Activated CD4-positive, alpha-beta T cell treated with anti-CD3 and anti-CD28 coated beads, Interleukin-2, amount 10 ng/mL, durations not matched to agents 7 days and 5 days (primary cell): ENCODE measurements at regions of chr9 and their contacts with region 1.

Region 1: DNA sequence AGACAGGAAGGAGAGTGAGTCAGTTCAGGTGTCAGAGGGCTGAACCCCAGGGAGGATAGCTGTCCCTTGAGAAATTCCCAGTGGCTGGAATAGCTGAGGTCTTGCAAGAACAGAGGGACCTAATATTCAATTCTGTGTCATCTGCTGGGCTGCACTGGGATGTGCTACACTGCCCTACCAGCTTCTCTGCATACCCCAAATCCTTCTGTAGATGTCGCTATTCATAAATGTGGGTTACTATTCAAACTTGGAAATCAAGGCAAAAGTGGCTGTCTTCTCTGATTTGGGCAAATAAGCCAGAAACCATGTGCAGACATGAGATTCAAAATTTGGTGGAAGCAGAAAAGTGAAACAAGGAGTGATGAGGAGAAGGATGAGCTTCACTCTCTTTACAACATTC is 16.3 kb downstream of the TNFSF8 start:
- DNase-seq: no peak
- H3K4me3 Mint-ChIP-seq: no peak overlapping the region
- H3K27ac Mint-ChIP-seq: peak overlapping the region; percentile 60
- H3K4me1 Mint-ChIP-seq: peaks cover 94% of the 10 kb centered on the region
- H3K27me3 Mint-ChIP-seq: no peaks in the 10 kb centered on the region

Region 2: GRCh38 chr9:114929201-114929600 is 15.1 kb after region 1 on chr9:
- CTCF ChIA-PET with region 1: interaction called, 16 read pairs
- POLR2A ChIA-PET with region 1: interaction called, 7 read pairs
- DNase-seq: peak; percentile 48
- H3K4me3 Mint-ChIP-seq: peak overlapping the region; percentile 81
- H3K27ac Mint-ChIP-seq: peak overlapping the region; percentile 98
- H3K4me1 Mint-ChIP-seq: peaks cover 55% of the 10 kb centered on the region
- H3K27me3 Mint-ChIP-seq: no peaks in the 10 kb centered on the region

Region 3: DNA sequence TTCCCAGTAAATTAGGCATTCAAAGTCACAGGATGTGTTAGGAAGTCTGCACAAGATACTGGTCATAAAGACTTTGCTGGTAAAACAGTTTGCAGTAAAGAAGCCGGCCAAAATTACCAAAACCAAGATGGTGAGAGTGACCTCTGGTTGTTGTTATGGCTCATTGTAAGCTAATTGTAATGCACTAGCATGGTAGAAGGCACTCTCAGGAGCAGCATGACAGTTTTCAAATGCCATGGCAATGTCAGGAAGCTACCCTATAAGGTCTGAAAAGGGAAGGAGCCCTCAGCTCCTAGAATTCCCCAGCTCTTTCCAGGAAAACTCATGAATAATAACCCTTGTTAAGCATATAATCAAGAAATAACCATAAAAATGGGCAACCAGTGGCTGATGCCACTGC is 268.1 kb after region 1 on chr9:
- CTCF ChIA-PET with region 1: no interaction called
- POLR2A ChIA-PET with region 1: no interaction called
- DNase-seq: no peak
- H3K4me3 Mint-ChIP-seq: no peak overlapping the region
- H3K27ac Mint-ChIP-seq: no peak overlapping the region
- H3K4me1 Mint-ChIP-seq: no peaks in the 10 kb centered on the region
- H3K27me3 Mint-ChIP-seq: peaks cover 9% of the 10 kb centered on the region